ENCODE measurements at regions of chr1 and their contacts with region 1.

Region 1: GRCh38 chr1:156451505-156452160 is 48.9 kb downstream of the MEF2D start:
- DNase-seq: no peak
- H3K4me3 ChIP-seq: no peak overlapping the region
- H3K27ac ChIP-seq: no peak overlapping the region
- H3K4me1 ChIP-seq: no peaks in the 10 kb centered on the region
- H3K27me3 ChIP-seq: no peaks in the 10 kb centered on the region
- CTCF ChIP-seq: no peak

Region 2: DNA sequence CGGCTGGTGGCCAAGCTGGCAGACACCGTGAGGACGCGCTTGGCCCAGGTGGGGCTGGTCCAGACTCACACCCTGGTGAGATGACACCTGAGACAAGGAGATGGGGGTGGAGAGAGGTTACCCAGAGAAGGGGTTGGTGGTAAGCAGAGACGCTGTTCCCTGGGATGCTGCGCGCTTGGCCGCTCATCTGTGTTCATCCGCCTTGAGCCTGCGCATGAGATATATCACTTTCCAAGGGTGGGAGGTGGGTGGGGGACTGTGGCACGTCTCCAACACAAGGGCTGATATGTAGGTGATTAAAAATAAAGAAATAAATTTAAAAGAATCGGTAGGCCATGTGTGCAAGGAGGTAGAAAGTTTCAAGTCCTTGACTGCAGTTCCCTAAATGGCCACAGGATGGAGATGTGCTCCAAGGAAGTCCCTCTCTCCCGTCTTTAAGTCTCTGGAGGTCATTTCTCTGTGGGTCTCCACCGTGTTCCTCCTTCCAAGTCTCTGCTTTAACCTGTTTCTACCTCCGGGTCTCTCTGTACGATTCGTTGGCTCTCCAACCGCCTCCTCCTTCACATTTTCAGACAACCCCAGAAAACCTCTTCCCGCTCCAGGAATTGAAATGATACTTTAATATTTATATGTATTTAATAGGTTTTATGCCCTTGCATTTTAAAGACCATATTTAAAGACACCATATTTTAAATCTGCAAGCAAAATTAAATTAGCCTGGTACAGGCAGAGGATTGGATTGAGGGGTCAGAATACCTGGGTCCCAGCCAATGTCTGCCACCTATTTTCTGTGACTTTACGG is 132.4 kb after region 1 on chr1:
- intact Hi-C with region 1: loop called (anchors 5 kb)
- DNase-seq: peak; percentile 84
- H3K4me3 ChIP-seq: no peak overlapping the region
- H3K27ac ChIP-seq: no peak overlapping the region
- H3K4me1 ChIP-seq: no peaks in the 10 kb centered on the region
- H3K27me3 ChIP-seq: no peaks in the 10 kb centered on the region
- CTCF ChIP-seq: peak; percentile 97

Region 3: DNA sequence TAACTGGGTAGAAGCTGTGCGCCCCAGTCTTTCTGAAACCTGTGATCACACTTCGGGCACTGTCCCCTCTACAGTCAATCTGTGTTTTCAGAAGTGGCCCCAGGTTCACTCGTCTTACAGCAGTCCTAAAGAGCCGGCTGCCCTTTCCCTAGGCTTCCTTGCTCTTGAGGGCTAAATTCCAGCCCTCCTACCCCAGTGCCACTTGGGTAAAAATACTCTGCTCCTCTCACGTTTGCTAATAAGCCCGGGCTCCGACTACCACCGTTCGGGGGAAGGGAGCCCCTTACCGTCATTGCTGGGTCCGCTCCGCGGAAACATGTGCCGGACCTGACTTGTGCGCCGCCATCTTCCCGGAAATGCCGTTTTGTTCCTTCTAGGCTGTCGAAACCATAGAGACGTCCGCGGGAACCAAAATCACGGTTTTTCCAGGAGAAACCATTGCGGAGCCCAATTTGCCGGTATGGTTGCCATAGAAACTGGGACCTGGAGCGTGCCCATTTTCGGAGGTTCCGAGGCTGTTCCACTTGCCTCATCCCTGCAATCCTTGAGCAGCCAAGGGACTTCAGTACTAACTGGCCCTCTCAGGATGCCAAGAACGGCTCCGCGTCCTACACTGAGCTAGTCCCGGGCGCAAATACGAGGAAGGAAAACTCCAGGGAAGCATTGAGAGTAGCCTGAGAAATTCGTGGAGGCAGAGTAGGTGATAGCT is 149.6 kb after region 1 on chr1 and contains the start of gene GPATCH4:
- intact Hi-C with region 1: loop called (anchors 5 kb)
- DNase-seq: peak; percentile 83
- H3K4me3 ChIP-seq: peak within 1 kb of the TSS; percentile 67
- H3K27ac ChIP-seq: peak within 1 kb of the TSS; percentile 58
- H3K4me1 ChIP-seq: peaks cover 5% of the 10 kb centered on the region
- H3K27me3 ChIP-seq: no peaks in the 10 kb centered on the region
- CTCF ChIP-seq: no peak
- total RNA-seq, gene GPATCH4: 12.3 to 31.3 TPM

Measured in colonic mucosa (tissue), 4 donors.